Breast epithelium (tissue), 4 donors: ENCODE measurements at regions of chr5 and their contacts with region 1.

Region 1: DNA sequence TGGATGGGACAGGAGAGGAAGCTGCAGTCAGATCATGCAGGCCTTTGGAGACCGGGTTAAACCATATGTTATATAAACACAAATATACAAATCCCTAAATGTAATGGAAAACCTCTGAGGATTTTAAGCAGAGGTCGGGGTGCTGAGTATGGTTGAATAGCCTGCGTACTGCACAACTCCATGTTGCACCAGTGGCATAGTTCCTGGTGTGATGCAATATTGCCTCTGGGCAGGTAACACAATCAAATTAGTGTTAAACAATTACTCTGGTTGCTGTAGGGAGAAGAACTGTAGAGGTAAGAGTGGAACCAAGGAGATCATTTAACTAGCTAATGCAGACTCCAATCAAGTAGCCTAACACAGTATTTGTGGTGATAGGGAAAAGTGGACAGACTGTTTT is 21.3 kb upstream of the RNF145 start:
- DNase-seq: peak in 1 of 2 donors; percentile 45
- H3K4me3 ChIP-seq: no peak overlapping the region
- H3K27ac ChIP-seq: no peak overlapping the region
- H3K4me1 ChIP-seq: no peaks in the 10 kb centered on the region
- H3K27me3 ChIP-seq: no peaks in the 10 kb centered on the region
- CTCF ChIP-seq: no peak
- POLR2A ChIP-seq: no peak

Region 2: DNA sequence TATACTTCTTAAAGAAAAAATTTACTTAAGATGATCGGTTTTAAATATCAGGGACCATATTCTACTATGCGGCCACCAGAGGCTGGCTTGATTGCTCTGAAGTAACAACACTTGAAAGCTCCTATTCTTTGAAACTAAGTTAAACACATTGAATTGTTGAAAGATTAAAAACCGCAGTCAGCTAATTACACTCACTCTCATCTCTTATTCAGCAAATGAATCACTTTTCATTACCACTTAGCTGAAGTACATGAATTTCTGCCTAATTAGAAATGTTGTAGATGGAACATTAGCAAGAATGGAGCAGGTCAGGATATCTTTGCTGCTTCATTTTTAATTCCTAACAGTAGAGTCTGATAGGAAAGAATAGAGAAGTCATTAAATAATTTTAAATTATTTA is 1444.9 kb before region 1 on chr5:
- intact Hi-C with region 1: loop called (anchors 5 kb)
- DNase-seq: no peak
- H3K4me3 ChIP-seq: no peak overlapping the region
- H3K27ac ChIP-seq: no peak overlapping the region
- H3K4me1 ChIP-seq: no peaks in the 10 kb centered on the region
- H3K27me3 ChIP-seq: no peaks in the 10 kb centered on the region
- CTCF ChIP-seq: no peak
- POLR2A ChIP-seq: no peak

Region 3: GRCh38 chr5:158154226-158155005 is 1076.2 kb before region 1 on chr5:
- intact Hi-C with region 1: loop called (anchors 5 kb)
- DNase-seq: peak in 1 of 2 donors; percentile 30
- H3K4me3 ChIP-seq: no peak overlapping the region
- H3K27ac ChIP-seq: peak overlapping the region; percentile 56 to 61
- H3K4me1 ChIP-seq: peaks cover 4 to 5% of the 10 kb centered on the region in 2 donors
- H3K27me3 ChIP-seq: no peaks in the 10 kb centered on the region
- CTCF ChIP-seq: no peak
- POLR2A ChIP-seq: no peak